GM10248 (cell line): ENCODE measurements at regions of chr22 and their contacts with region 1.

Region 1: DNA sequence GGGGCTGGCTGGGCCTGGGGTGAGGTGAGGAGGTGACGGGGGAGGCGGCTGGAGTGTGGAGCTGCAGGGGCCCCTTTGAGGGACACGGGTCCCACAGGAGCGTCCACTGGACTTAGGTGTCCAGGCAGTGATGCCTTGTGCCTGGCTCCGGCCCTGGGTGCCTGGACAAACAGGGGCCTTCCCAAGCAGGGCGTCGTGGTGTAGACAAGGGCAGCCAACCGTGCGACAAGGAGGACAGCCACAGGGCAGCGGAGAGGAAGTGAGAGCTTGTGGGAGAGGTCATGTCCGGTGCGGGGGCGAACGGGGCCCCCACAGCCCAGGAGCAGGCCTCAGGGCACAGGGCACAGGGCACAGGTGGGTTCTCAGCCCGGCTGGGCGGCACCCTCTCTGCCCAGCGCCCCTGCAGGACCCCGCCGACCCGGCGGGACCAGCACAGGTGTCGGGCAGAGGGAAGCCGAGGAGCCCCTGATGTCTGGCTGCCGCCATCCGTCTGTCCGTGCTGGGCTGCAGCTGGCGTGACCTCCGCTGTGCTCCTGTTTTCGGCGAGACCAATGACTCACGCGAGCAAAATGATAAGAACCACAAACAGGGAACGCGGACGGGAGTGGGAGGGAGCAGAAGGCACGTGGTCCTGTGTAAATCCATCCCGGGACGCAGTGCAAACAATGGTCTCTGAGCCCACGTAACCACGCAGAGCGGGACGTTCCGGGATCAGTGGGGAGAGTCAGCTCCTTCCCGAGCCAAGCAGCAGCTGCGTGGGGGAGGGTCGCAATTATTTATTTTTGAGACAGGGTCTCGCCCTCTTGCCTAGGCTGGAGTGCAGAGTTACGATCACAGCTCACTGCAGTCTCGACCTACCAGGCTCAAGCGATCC is 49.1 kb upstream of the A4GALT start:
- DNase-seq: peak; percentile 89
- CTCF ChIP-seq: no peak

Region 2: GRCh38 chr22:42754658-42755057 is 15.2 kb before region 1 on chr22:
- CTCF ChIA-PET with region 1: interaction called, 12 read pairs
- POLR2A ChIA-PET with region 1: no interaction called
- DNase-seq: no peak
- CTCF ChIP-seq: no peak

Region 3: DNA sequence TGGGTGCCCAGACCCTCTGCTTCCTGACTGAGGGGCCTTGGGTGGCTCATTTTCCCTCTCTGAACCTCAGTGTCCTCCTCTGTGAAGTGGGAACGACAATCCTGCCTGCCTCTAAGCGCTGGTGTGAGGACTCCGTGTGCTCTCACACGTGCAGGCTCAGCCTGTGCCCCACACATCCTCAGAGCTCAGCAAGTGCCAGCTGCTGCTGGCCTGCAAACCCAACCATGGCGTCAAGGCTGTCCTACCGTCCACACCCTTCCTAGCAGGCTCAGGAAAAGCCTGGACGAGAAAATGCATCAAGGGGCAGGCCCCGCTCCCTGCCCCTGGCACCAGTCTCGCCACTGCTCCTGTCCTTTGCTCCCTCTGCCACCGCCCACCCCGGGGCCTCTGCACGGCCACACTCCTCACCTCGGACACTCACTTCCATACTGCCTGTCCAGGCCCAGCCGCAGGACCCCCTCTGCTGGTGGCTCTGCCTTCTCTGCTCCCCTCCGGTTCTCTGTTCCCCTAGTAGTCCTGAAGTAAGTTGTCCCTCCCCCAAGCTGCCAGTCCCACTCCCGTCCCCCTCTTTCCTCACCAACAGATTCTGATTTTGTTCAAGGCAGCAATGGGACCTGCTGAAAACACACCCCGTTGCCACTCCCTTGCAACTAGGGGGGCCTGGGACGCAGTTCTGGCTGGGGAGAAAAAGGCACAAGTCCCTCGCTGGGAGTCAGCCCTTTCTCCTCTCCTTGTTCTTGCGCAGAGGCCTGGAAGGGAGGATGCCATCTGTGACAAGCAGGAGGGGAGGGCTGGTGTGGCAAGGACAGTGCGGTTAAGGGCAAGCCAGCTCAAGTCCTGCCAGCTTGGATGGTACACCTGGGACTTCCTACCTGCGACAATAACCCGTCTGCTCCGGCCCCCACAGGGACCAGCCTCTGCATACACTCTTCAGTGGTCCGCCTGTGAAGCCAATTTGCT is 25.0 kb after region 1 on chr22:
- CTCF ChIA-PET with region 1: no interaction called
- POLR2A ChIA-PET with region 1: no interaction called
- DNase-seq: no peak
- CTCF ChIP-seq: no peak